Common myeloid progenitor, CD34-positive (primary cell): ENCODE measurements at regions of chr2 and their contacts with region 1.

Region 1: GRCh38 chr2:20635675-20636584 is 15.0 kb downstream of the HS1BP3 start:
- DNase-seq: peak; percentile 52 to 76 (median 76)
- H3K4me3 ChIP-seq: no peak overlapping the region
- H3K27ac ChIP-seq: no peak overlapping the region
- H3K4me1 ChIP-seq: peaks cover 0 to 14% (median 2%) of the 10 kb centered on the region in 4 experiments
- H3K27me3 ChIP-seq: no peaks in the 10 kb centered on the region

Region 2: DNA sequence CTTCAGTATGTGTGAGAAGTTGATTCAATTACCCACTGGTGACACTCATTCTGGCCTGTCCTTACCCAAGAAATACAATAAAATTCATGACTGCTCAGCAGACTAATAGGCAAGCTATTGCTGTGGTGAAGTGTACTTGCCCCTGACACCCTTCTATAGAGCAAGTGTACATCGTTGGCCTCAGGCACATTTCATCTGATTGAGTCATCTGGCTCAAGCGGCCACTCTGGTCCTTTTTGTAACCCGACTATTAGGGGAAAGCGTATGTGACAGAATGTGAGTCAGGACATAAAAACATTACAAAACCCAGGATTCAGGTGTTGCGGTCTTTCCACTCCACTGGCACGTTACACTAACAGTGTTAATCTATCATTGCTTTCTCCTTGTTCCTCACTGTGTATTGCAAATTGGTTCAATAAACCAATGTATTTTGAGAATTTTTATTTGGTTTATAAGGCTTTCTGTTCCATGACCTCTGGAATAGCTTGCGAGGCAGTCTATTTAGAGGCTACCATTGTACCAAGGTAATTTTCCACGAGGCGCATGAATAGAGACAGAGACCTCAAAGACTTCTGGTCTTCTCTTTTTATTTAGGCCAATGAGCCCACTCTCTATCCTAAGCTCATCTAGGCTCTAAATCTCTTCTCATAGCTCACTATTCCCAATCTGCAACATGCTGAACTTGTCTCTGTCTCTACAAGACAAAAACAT is 724.0 kb before region 1 on chr2:
- CTCF ChIA-PET with region 1: no interaction called
- POLR2A ChIA-PET with region 1: no interaction called
- DNase-seq: no peak
- H3K4me3 ChIP-seq: no peak overlapping the region
- H3K27ac ChIP-seq: no peak overlapping the region
- H3K4me1 ChIP-seq: no peaks in the 10 kb centered on the region
- H3K27me3 ChIP-seq: no peaks in the 10 kb centered on the region

Region 3: DNA sequence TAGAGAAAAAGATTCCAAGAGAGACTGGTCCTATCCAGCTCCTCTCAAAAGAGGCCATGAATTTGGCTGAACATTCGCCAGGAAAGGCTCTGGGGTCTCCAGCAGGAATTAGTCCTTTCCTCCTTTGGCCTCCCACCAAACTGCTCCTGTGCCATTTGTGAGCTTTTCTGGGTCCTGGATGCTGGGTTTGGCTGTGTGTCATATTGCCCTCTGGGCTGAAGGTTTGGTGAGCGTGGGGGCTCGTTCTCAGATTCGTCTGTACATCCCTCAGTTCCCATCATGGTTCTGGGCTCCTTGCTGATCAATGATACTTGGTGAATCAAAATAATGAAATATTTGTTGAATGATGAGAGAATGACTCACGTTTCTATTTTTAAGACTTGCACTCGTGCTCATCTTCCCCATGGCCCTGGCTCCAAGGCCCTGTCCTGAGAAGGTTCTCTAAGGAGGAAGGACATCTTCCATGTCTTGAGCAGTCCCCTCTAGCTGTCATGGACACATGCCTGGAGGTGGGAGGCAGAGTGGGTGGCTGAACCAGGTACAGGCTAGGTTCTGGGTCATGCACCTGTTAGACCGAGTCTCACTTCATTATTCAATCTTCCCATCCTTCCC is 236.9 kb before region 1 on chr2:
- CTCF ChIA-PET with region 1: interaction called, 24 read pairs
- POLR2A ChIA-PET with region 1: no interaction called
- DNase-seq: no peak
- H3K4me3 ChIP-seq: no peak overlapping the region
- H3K27ac ChIP-seq: no peak overlapping the region
- H3K4me1 ChIP-seq: no peaks in the 10 kb centered on the region
- H3K27me3 ChIP-seq: no peaks in the 10 kb centered on the region

Region 4: GRCh38 chr2:20446917-20447436 is 189.0 kb before region 1 on chr2 and contains the start of gene RHOB:
- CTCF ChIA-PET with region 1: interaction called, 52 read pairs
- POLR2A ChIA-PET with region 1: interaction called, 5 read pairs
- DNase-seq: peak; percentile 97 to 99 (median 98)
- H3K4me3 ChIP-seq: peak within 1 kb of the TSS; percentile 57 to 93 (median 71)
- H3K27ac ChIP-seq: peak within 1 kb of the TSS in 1 of 2 experiments; percentile 54
- H3K4me1 ChIP-seq: peaks cover 0 to 21% (median 17%) of the 10 kb centered on the region in 4 experiments
- H3K27me3 ChIP-seq: peaks cover 7 to 30% (median 27%) of the 10 kb centered on the region in 5 experiments

Region 5: GRCh38 chr2:20650880-20651730 is 15.2 kb after region 1 on chr2 and contains the start of gene HS1BP3:
- CTCF ChIA-PET with region 1: interaction called, 26 read pairs
- POLR2A ChIA-PET with region 1: no interaction called
- DNase-seq: peak; percentile 83 to 91 (median 91)
- H3K4me3 ChIP-seq: peak within 1 kb of the TSS; percentile 74 to 89 (median 81)
- H3K27ac ChIP-seq: peak within 1 kb of the TSS; percentile 64 to 88
- H3K4me1 ChIP-seq: peaks cover 2 to 29% (median 19%) of the 10 kb centered on the region in 4 experiments
- H3K27me3 ChIP-seq: no peaks in the 10 kb centered on the region

Region 6: GRCh38 chr2:20689428-20690264 is 53.7 kb after region 1 on chr2:
- CTCF ChIA-PET with region 1: no interaction called
- POLR2A ChIA-PET with region 1: no interaction called
- DNase-seq: no peak
- H3K4me3 ChIP-seq: no peak overlapping the region
- H3K27ac ChIP-seq: no peak overlapping the region
- H3K4me1 ChIP-seq: peaks cover 0 to 31% (median 2%) of the 10 kb centered on the region in 4 experiments
- H3K27me3 ChIP-seq: no peaks in the 10 kb centered on the region